ENCODE measurements at regions of chr7 and their contacts with region 1.

Region 1: GRCh38 chr7:74417419-74417971 is 36.2 kb upstream of the GTF2IRD1 start:
- DNase-seq: peak; percentile 26 to 61 (median 36)
- H3K4me3 ChIP-seq: no peak overlapping the region
- H3K4me3 Mint-ChIP-seq: no peak overlapping the region
- H3K27ac ChIP-seq: no peak overlapping the region
- H3K27ac Mint-ChIP-seq: no peak overlapping the region
- H3K4me1 ChIP-seq: no peaks in the 10 kb centered on the region
- H3K4me1 Mint-ChIP-seq: no peaks in the 10 kb centered on the region
- H3K27me3 ChIP-seq: no peaks in the 10 kb centered on the region
- H3K27me3 Mint-ChIP-seq: no peaks in the 10 kb centered on the region

Region 2: DNA sequence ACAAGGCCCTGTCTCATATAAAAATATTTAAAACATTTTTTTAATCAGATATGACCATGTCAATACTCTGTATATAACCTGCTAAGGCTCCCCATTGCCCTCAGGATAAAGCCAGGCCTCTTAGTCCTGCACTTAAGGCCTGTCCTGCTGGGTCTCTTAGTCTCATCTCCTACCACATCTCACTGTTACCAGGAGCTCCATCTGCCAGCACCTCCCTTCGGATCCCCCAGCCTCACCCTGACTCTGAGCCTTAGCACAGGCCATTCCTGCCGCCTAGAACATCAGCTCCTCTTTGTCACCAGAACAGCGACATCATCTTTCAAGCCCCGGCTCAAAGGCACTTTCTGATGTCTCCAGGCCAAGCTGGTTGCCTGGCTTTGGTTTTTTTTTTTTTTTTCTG is 10.5 kb after region 1 on chr7:
- CTCF ChIA-PET with region 1: interaction called, 10 read pairs
- POLR2A ChIA-PET with region 1: no interaction called
- DNase-seq: no peak
- H3K4me3 ChIP-seq: no peak overlapping the region
- H3K4me3 Mint-ChIP-seq: no peak overlapping the region
- H3K27ac ChIP-seq: no peak overlapping the region
- H3K27ac Mint-ChIP-seq: no peak overlapping the region
- H3K4me1 ChIP-seq: no peaks in the 10 kb centered on the region
- H3K4me1 Mint-ChIP-seq: no peaks in the 10 kb centered on the region
- H3K27me3 ChIP-seq: no peaks in the 10 kb centered on the region
- H3K27me3 Mint-ChIP-seq: peaks cover 0 to 1% of the 10 kb centered on the region in 2 donors

Region 3: DNA sequence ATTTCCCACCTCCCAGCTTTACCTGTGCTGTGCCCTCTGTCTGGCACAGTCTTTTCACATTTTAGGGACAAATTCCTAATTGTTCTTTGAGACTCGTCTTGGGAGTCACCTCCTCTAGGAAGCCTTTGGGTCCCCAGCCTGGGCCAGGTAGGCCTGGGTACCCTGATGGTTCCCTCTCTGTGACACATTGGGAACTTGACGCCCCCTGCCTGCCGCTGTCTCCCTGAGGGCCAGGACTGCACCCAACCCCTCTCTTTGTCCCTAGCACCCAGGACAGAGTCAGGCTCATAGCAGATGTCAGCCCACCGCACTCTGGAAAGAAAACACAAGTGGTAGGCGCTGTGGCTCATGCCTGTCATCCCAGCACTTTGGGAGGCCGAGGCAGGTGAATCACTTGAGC is 107.6 kb after region 1 on chr7:
- CTCF ChIA-PET with region 1: no interaction called
- POLR2A ChIA-PET with region 1: no interaction called
- DNase-seq: no peak
- H3K4me3 ChIP-seq: no peak overlapping the region
- H3K4me3 Mint-ChIP-seq: no peak overlapping the region
- H3K27ac ChIP-seq: no peak overlapping the region
- H3K27ac Mint-ChIP-seq: no peak overlapping the region
- H3K4me1 ChIP-seq: no peaks in the 10 kb centered on the region
- H3K4me1 Mint-ChIP-seq: no peaks in the 10 kb centered on the region
- H3K27me3 ChIP-seq: no peaks in the 10 kb centered on the region
- H3K27me3 Mint-ChIP-seq: peaks cover 0 to 4% of the 10 kb centered on the region in 2 donors